ENCODE measurements at regions of chr7 and their contacts with region 1.

Region 1: DNA sequence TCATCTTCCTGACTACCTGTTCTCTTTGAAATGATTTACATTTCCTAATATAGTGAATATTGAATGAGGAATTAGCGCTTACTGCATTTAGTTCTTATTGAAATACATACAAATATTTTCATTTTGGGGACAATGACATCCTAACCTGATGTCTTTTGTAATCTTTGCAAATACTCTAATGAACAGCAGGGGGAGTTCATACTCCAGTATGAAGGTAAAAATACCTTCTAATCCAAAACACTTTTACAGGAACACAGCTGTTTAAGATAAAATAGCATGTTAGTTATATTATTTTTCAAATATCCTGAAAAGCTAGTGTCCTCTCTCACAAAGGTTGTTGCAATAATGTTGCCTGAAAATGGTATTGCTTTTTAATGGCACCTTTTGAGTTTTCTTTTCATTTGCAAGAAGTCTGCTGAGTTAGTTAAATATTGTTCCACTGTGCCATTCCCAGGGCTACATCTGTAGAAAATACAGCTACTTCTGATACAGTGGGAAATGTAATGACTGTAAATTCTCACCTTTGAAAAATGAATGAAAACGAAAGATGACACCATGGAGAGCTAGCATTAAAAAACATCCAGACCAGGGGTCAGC is 400.0 kb downstream of the PHF14 start:
- DNase-seq: no peak
- H3K4me3 ChIP-seq: no peak overlapping the region
- H3K4me3 Mint-ChIP-seq: no peak overlapping the region
- H3K27ac Mint-ChIP-seq: no peak overlapping the region
- H3K4me1 ChIP-seq: no peaks in the 10 kb centered on the region
- H3K4me1 Mint-ChIP-seq: no peaks in the 10 kb centered on the region
- H3K27me3 ChIP-seq: no peaks in the 10 kb centered on the region; the same call in 1 of the 2 replicates
- H3K27me3 Mint-ChIP-seq: peaks cover 4% of the 10 kb centered on the region
- CTCF ChIP-seq: peak; percentile 59 to 64

Region 2: GRCh38 chr7:11281953-11282352 is 91.7 kb before region 1 on chr7:
- CTCF ChIA-PET with region 1: no interaction called
- POLR2A ChIA-PET with region 1: no interaction called
- intact Hi-C with region 1: no loop called
- DNase-seq: no peak
- H3K4me3 ChIP-seq: no peak overlapping the region
- H3K4me3 Mint-ChIP-seq: no peak overlapping the region
- H3K27ac Mint-ChIP-seq: no peak overlapping the region
- H3K4me1 ChIP-seq: no peaks in the 10 kb centered on the region
- H3K4me1 Mint-ChIP-seq: no peaks in the 10 kb centered on the region
- H3K27me3 ChIP-seq: no peaks in the 10 kb centered on the region
- H3K27me3 Mint-ChIP-seq: peaks cover 5% of the 10 kb centered on the region
- CTCF ChIP-seq: no peak

Region 3: DNA sequence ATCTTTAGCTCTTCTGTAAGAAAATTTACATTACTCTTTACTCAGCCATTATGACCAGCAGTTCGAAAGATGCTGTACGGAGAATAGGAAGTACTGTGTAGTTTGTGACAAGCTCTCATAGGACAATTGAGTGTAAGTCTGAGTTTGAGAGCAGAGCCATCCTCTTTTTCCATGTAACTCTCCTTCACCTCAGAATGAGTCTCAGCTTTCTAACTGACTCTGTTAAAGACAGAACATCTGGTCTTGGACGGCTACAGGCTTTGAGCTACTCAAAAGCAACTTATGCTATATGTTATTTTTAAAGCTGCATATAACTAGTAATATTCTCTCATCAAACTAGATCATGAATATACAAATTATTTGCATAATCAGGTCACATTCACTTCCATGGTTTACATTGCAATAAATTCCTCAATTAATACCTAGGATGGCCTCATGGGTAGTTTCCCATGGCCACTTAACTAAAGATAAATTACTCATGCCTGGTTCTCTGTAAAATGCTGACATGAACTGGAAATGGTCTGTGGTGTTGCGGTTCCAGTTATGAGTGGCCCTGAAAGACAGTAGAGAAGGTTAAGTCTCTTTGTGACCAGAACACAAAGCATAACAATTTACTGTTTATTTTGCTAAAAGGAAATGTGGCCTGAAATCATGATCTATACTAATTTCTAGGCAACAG is 41.3 kb before region 1 on chr7:
- CTCF ChIA-PET with region 1: no interaction called
- POLR2A ChIA-PET with region 1: no interaction called
- intact Hi-C with region 1: no loop called
- DNase-seq: no peak
- H3K4me3 ChIP-seq: no peak overlapping the region
- H3K4me3 Mint-ChIP-seq: no peak overlapping the region
- H3K27ac Mint-ChIP-seq: no peak overlapping the region
- H3K4me1 ChIP-seq: no peaks in the 10 kb centered on the region
- H3K4me1 Mint-ChIP-seq: no peaks in the 10 kb centered on the region
- H3K27me3 ChIP-seq: no peaks in the 10 kb centered on the region
- H3K27me3 Mint-ChIP-seq: peaks cover 8% of the 10 kb centered on the region
- CTCF ChIP-seq: no peak

Region 4: DNA sequence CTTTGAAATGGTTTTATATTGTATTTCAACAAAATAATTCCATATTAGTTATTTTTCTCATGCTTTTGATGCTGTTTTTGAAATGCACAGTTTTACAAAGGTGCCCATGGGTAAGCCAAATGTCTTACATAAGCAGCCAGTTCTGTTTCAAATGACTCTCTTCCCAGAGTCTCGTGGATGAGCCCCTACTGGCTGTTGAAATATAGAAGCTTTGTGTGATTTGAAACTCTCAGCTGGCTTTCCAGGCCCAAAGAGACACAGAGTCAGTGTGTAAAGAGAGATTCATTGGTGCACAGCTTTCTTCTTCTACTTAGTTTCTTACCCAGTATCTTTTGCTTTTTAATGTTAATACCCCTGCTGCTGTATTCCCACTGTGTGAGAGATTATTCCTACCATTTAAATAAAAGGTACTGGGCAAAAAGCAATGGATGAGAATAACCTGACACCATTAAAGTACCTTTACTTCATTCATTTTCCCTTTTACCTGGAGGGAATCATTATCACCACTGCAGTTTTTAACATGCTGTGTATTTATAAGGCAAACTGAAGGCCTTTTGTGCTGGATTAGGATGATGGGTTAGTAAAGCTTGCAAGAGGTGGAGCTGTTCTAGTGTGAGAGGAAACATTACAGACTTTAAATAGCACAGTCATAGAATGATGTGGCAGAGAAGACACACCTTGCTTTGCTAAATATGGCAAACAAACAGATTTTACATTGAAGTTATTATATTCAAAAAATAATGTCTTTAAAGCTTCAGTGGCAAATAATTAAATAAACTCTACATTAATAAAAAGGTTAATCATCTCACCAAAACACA is 43.2 kb after region 1 on chr7:
- CTCF ChIA-PET with region 1: no interaction called
- POLR2A ChIA-PET with region 1: no interaction called
- intact Hi-C with region 1: no loop called
- DNase-seq: no peak
- H3K4me3 ChIP-seq: no peak overlapping the region
- H3K4me3 Mint-ChIP-seq: no peak overlapping the region
- H3K27ac Mint-ChIP-seq: no peak overlapping the region
- H3K4me1 ChIP-seq: no peaks in the 10 kb centered on the region
- H3K4me1 Mint-ChIP-seq: no peaks in the 10 kb centered on the region
- H3K27me3 ChIP-seq: no peaks in the 10 kb centered on the region
- H3K27me3 Mint-ChIP-seq: no peaks in the 10 kb centered on the region
- CTCF ChIP-seq: no peak

Region 5: GRCh38 chr7:11427686-11428273 is 54.1 kb after region 1 on chr7:
- CTCF ChIA-PET with region 1: no interaction called
- POLR2A ChIA-PET with region 1: no interaction called
- intact Hi-C with region 1: loop called (anchors 5 kb)
- DNase-seq: peak in 1 of 2 experiments; percentile 24
- H3K4me3 ChIP-seq: no peak overlapping the region
- H3K4me3 Mint-ChIP-seq: no peak overlapping the region
- H3K27ac Mint-ChIP-seq: no peak overlapping the region
- H3K4me1 ChIP-seq: no peaks in the 10 kb centered on the region
- H3K4me1 Mint-ChIP-seq: no peaks in the 10 kb centered on the region
- H3K27me3 ChIP-seq: no peaks in the 10 kb centered on the region
- H3K27me3 Mint-ChIP-seq: no peaks in the 10 kb centered on the region
- CTCF ChIP-seq: peak; percentile 72 to 78

Region 6: GRCh38 chr7:11474902-11475585 is 101.4 kb after region 1 on chr7:
- CTCF ChIA-PET with region 1: interaction called, 6 read pairs
- POLR2A ChIA-PET with region 1: no interaction called
- intact Hi-C with region 1: loop called (anchors 10 kb)
- DNase-seq: peak in 1 of 2 experiments; percentile 3
- H3K4me3 ChIP-seq: no peak overlapping the region
- H3K4me3 Mint-ChIP-seq: no peak overlapping the region
- H3K27ac Mint-ChIP-seq: no peak overlapping the region
- H3K4me1 ChIP-seq: no peaks in the 10 kb centered on the region
- H3K4me1 Mint-ChIP-seq: no peaks in the 10 kb centered on the region
- H3K27me3 ChIP-seq: no peaks in the 10 kb centered on the region
- H3K27me3 Mint-ChIP-seq: no peaks in the 10 kb centered on the region
- CTCF ChIP-seq: peak in 1 of 2 experiments; percentile 20

Region 7: DNA sequence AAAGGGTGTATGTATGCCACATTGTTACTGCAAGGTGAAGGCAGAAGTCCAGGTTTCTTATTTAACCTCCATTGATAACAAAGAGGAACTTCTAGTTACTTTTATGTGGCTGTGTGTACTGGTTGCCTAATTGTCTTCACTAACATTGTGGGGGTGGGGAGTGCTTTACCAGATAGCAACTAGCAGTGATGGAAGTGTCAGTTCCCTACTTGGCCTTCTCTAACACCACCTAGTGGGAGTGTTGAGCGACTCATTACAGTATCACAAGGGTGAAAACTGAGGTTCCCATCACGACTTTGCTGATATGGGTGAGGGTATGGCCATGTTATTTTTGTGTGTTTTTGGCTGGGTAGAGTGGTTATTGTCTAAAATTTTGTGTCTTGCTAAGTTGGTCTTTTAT is 184.0 kb after region 1 on chr7:
- CTCF ChIA-PET with region 1: no interaction called
- POLR2A ChIA-PET with region 1: no interaction called
- intact Hi-C with region 1: loop called (anchors 1 kb)
- DNase-seq: peak; percentile 61 to 65
- H3K4me3 ChIP-seq: no peak overlapping the region
- H3K4me3 Mint-ChIP-seq: no peak overlapping the region
- H3K27ac Mint-ChIP-seq: no peak overlapping the region
- H3K4me1 ChIP-seq: no peaks in the 10 kb centered on the region
- H3K4me1 Mint-ChIP-seq: no peaks in the 10 kb centered on the region
- H3K27me3 ChIP-seq: no peaks in the 10 kb centered on the region
- H3K27me3 Mint-ChIP-seq: no peaks in the 10 kb centered on the region
- CTCF ChIP-seq: peak; percentile 45 to 62

Region 8: DNA sequence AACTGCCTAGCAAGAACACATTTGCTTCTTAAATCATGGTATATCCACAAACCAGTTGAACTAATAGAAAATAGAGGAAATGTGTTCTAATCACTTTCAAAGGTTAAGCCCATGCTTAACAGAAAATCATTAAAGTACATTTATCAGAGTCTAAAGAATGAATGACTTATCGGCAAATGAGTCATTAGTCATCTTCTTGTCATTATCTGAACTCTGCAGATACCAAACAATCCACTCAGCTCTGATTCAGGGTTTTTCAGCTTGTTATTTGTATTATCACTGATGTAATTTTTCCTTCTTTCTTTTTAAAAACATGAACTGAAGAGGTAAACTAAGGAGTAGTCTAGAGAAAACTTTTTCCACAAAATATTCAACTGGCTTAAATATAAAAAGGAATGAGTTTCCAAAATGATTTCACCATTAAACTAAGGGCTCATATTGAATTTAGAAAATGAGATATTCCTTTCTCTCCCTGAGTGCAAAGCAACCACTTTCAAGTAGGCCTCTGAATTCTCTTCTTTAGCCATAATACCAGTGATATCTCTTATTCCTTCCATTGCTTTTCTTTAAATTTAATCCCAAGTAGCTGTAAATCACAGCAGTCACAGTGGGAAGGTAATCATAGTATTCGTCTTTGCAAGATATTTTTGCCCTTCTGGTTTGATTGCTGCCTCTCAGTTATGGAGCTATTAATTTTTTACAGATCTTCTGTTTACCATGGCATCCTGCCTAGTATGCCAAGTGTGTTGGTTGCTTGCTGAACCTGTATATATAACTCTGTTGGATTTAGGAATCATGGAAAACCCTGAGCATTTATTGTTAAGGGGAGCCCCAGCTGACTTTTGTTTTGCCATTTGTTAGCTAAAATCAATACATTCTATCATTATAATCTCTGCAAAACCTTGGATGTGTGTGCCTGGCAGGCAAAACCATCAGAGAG is 333.3 kb after region 1 on chr7:
- CTCF ChIA-PET with region 1: no interaction called
- POLR2A ChIA-PET with region 1: no interaction called
- intact Hi-C with region 1: no loop called
- DNase-seq: no peak
- H3K4me3 ChIP-seq: no peak overlapping the region
- H3K4me3 Mint-ChIP-seq: no peak overlapping the region
- H3K27ac Mint-ChIP-seq: no peak overlapping the region
- H3K4me1 ChIP-seq: 0 out of 2 replicates have a peak, but pooled peaks cover 5% of the 10 kb centered on the region
- H3K4me1 Mint-ChIP-seq: no peaks in the 10 kb centered on the region
- H3K27me3 ChIP-seq: no peaks in the 10 kb centered on the region
- H3K27me3 Mint-ChIP-seq: no peaks in the 10 kb centered on the region
- CTCF ChIP-seq: no peak

Measured in Caco-2 (cell line).